ENCODE measurements at regions of chr9 and their contacts with region 1.

Region 1: DNA sequence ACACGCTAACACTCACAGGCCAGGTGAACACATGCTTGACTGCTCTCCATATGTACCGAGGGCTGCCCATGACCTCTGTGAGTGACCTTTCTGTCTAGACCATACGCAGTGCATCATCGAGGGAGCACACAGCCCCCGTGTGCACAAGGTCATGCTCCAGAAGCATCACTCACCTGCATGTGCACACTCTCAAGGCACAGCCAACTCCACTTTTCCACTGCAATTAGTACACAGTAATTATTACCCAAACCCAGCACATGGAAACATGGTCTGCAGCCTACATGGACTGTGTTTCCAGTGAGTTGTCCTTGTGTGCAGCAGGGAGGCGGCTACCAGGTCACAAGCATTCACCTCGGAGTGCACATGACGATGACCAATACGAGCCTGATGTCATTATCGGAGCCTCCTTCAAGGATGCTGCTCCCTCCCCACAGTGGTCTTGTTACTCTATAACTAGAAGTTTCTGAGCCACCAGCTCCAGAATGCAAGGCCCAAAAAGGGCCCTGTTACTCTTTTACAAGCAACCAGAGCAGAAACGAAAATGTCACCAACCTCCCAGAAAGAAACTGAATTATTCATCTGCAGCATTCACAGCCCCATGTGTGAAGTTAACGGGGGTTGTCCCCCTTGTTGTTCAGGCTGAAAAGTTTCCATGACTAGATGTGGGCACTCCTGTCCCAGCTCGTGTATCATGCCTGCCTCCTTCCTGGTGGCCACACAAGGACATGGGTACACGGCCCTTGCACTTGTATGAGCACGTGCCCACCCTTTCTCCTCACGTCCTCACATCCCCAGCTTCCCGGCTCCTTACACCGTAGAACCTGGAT is 31.2 kb downstream of the SEMA4D start:
- DNase-seq: peak; percentile 82
- H3K4me3 Mint-ChIP-seq: peak overlapping the region; percentile 89
- H3K27ac Mint-ChIP-seq: peak overlapping the region; percentile 96
- H3K4me1 Mint-ChIP-seq: peaks cover 92% of the 10 kb centered on the region
- H3K27me3 Mint-ChIP-seq: no peaks in the 10 kb centered on the region

Region 2: GRCh38 chr9:89410641-89411350 is 55.9 kb before region 1 on chr9:
- intact Hi-C with region 1: loop called (anchors 1 kb)
- DNase-seq: peak; percentile 81
- H3K4me3 Mint-ChIP-seq: peak overlapping the region; percentile 76
- H3K27ac Mint-ChIP-seq: peak overlapping the region; percentile 96
- H3K4me1 Mint-ChIP-seq: peaks cover 87% of the 10 kb centered on the region
- H3K27me3 Mint-ChIP-seq: no peaks in the 10 kb centered on the region

Region 3: GRCh38 chr9:89428901-89429890 is 37.5 kb before region 1 on chr9:
- intact Hi-C with region 1: loop called (anchors 1 kb)
- DNase-seq: peak; percentile 84
- H3K4me3 Mint-ChIP-seq: peak overlapping the region; percentile 26
- H3K27ac Mint-ChIP-seq: peak overlapping the region; percentile 86
- H3K4me1 Mint-ChIP-seq: peaks cover 72% of the 10 kb centered on the region
- H3K27me3 Mint-ChIP-seq: no peaks in the 10 kb centered on the region

Region 4: GRCh38 chr9:89477811-89478630 is 11.4 kb after region 1 on chr9:
- intact Hi-C with region 1: loop called (anchors 1 kb)
- DNase-seq: peak; percentile 89
- H3K4me3 Mint-ChIP-seq: peak overlapping the region; percentile 88
- H3K27ac Mint-ChIP-seq: peak overlapping the region; percentile 97
- H3K4me1 Mint-ChIP-seq: peaks cover 84% of the 10 kb centered on the region
- H3K27me3 Mint-ChIP-seq: no peaks in the 10 kb centered on the region

Region 5: DNA sequence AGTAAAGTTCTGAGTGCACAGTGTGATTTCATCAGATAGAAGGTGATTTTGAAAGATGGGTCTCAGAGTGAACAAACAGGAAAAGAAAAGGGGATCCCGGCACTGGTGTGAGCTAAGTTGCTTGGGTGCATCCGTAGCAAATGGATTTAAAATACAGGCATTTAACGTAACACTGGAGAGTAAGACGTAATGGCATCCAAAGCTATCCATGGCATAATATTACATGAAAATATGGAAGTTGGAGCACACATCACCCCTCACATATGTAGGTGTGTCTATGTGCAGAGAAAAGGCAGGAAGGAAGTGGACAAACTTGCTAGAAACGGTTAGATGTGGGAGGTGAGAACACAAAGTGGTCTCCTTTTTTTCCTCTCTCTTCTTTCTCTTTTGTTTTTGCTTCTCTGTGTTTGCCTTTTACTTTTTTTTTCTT is 69.5 kb after region 1 on chr9:
- intact Hi-C with region 1: loop called (anchors 1 kb)
- DNase-seq: peak; percentile 83
- H3K4me3 Mint-ChIP-seq: peak overlapping the region; percentile 73
- H3K27ac Mint-ChIP-seq: peak overlapping the region; percentile 90
- H3K4me1 Mint-ChIP-seq: peaks cover 80% of the 10 kb centered on the region
- H3K27me3 Mint-ChIP-seq: no peaks in the 10 kb centered on the region